Left cardiac atrium (tissue), 4 donors: ENCODE measurements at regions of chr7 and their contacts with region 1.

Region 1: GRCh38 chr7:70953796-70954195 is 178.1 kb upstream of the GALNT17 start:
- DNase-seq: no peak
- ATAC-seq: no peak

Region 2: DNA sequence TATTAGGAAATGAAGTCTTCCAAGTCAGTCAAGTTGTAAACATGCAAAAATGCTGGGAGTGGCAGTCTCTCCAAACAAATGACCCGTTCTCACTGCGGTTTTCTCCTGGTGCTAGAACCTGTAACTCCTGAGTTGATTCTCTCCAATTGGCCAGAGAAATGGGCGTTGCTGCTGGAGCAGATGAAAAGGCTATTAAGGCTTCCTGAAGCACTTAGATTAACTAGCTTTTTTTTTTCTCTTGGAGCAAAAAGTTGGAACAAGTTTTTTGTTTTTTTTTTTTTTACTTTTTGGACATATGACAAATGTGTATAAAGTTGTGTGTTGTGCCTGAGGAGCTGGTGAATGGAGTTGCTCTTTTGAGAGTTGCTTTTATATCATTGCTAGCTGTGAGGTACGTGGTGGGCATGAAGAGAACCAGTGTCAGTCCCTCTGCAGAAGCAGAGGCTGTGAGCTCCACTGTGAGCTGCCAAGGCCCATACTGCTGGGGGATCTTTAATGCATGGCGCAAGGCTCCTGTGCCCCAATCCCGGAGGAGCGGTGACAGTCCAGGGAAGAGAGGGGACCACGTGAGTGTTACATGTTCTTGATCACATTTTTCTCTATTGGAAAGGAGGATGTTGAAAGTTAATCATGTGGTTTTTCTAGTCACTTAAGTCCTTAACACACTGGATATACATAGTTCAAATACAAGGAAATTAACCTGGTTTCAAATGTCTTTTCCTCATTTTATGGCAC is 215.5 kb before region 1 on chr7:
- intact Hi-C with region 1: no loop called
- DNase-seq: no peak
- ATAC-seq: peak in 1 of 2 donors; percentile 70

Region 3: GRCh38 chr7:70972693-70973092 is 18.9 kb after region 1 on chr7:
- intact Hi-C with region 1: loop called in 1 of 2 experiments (anchors 2 kb)
- DNase-seq: no peak
- ATAC-seq: no peak